Cardiac septum (tissue), 1 donor: ENCODE measurements at regions of chr5 and their contacts with region 1.

Region 1: DNA sequence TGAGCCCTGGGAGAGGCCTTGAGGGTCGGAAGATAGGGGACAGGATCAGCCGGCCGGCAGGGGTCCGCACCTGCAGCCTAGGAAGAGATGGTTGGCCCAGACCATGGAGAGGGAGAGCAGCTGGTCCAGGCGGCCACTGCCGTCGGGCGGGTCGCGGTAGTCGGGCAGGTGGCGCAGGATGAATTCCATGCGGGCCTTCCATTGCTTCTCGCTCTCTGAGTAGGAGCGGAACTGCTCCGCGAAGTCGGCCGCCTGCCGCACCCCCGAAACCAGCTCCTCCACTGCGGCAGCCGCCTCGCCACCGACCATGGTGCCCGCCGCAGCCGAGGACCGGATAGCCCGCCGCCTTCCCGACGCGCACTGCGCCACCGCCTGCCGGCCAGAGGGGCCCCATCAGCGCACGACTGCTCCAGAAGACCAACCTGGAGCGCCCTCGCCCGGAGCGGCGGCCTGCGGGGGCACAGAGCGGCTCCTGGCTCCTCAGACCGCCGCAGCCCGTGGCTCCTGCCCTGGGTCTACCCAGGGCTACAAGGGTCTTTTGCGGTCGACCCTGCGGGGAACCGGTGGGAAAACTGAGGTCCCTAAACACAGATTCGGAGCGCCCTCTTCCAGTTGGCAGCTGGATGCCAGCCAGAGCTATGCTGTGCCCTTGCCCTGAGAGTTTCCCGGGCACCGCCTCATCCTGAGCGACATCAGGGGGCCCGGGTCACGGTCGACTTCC is at the start of gene CDKN2AIPNL:
- DNase-seq: peak; percentile 96
- total RNA-seq, gene CDKN2AIPNL: 27.2 TPM

Region 2: GRCh38 chr5:134304311-134304710 is 107.4 kb before region 1 on chr5:
- intact Hi-C with region 1: loop called (anchors 5 kb)
- DNase-seq: no peak

Region 3: DNA sequence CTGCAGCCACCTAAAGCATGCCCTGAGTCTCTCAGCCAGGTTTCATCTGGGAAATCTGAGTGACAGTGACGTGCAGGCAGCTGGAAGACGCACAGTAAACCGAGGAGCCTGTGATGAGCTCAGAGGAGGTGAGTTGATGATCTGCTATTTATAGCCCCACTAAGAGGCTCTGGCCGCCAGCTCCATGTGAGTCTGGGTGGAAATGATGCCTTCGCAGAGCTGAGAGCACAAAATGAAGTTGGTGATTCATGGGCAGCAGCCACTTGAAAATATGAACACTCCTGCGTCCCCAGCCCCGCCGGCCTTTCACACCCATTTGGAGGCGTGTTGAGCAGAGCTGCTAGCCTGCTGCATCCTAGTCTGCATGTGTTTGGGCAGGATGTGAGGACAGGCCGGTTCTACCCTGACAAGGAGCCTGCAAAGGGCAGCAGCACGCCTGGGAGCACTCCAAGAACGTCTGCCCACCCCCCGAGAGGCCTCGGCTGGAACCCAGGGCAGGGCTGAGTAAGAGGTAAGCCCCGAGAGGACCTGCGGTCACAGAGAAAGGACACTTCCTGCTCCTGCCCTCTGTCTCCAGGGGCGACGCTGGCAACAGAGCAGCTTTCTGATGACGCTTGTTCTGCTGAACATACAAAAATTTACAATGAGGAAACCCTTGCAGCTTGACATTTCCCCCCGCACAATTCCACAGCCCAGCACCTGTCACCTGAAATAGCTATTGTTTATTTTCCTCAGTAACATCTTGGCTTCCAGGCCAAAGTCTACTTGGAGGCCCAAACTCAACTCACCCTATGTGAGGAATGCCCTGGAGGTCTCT is 25.0 kb after region 1 on chr5:
- intact Hi-C with region 1: loop called (anchors 2 kb)
- DNase-seq: peak; percentile 80

Region 4: GRCh38 chr5:134506054-134507039 is 94.6 kb after region 1 on chr5:
- intact Hi-C with region 1: loop called (anchors 5 kb)
- DNase-seq: peak; percentile 90

Region 5: DNA sequence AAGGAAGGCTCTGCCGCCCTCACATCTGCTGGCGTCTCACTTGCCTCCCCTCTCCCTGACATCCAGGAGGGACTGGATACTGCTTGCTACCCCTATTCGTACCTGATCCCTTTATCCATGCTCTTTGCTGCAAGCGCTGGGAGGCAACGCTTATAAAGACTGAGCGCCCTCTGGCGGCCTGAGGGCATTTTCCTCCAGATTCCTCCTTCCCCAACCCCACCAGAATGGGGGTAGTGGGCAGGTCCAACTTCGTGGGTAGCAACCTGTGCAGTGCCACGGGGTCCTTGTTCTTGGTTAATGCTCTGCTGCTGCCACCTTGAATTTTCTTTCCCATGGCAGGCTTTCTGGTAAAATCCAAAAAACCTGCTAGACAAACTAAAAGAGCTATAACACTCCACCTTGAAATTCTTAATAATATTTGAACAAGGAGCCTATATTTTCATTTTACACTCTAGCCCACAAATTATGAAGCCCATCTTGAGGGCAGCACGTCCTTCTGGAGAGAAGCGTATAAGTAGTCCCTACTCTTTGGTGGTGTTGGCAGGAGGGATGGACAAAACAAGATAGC is 166.2 kb after region 1 on chr5:
- intact Hi-C with region 1: loop called (anchors 2 kb)
- DNase-seq: peak; percentile 86

Region 6: GRCh38 chr5:134637161-134637582 is 225.5 kb after region 1 on chr5:
- intact Hi-C with region 1: no loop called
- DNase-seq: no peak